ENCODE measurements at regions of chr14 and their contacts with region 1.

Region 1: DNA sequence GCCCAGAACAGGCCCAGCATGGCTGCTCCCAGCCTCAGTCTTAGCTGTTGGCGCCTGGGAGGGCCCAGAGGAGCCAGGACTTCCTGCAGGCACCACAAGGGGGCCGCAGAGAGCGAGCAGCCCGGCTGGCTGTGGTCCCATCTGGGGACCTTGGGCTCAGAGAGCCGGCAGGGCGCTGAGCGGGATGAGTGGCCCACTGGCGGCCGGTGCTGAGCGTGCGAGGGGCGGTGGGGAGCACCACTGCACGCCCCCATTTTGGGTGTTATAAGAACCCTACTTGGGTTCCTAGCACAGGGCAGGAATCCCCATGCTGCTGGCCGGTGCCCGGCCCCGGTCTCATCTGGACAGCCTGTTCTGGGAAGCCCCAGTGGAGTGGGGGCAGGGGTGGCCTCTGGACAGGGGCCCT is 25.9 kb upstream of the CRIP2 start:
- DNase-seq: peak; percentile 47
- ATAC-seq: peak; percentile 98
- H3K4me3 ChIP-seq: no peak overlapping the region
- H3K27ac ChIP-seq: no peak overlapping the region
- H3K4me1 ChIP-seq: no peaks in the 10 kb centered on the region
- H3K27me3 ChIP-seq: no peaks in the 10 kb centered on the region
- CTCF ChIP-seq: peak; percentile 84
- POLR2A ChIP-seq: no peak
- RAD21 ChIP-seq: peak; percentile 71

Region 2: DNA sequence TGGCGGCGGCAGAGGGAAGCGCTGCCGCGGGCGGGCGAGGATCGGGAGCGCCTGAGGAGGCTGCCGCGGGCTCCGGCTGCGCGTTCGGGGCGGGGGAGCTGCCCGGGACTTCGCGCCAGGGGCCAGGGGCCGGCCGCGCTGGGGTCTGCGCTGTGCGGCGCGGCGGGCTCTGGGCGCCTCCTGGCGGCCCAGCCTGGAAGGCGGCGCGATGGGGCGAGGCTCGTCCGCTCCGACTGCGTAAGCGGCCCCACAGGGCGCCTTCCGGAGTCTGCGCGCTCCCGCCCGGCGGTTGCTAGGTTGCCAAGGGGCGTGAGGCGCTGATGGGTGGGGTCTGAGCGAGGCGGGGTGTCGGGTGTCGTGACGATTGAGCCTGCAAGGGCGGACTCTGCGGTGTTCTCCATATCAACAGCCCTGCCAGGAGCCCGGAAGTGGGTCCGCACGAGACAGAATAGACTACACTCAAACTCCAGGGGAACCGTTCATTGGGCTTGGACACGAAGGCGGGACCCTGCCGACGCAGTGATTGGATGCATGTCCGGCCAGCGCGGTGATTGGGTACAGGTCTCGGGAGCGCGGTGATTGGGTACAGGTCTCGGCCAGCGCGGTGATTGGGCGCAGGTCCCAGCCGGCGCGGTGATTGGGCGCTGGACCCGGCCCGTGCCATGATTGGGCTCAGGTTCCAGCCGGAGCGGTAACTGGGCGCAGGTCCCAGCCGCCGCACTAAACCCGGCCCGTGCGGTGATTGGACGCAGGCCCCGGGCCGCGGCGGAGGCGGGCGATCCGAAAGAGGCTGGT is 42.1 kb after region 1 on chr14 and contains the start of gene TEDC1:
- CTCF ChIA-PET with region 1: interaction called, 3 read pairs
- POLR2A ChIA-PET with region 1: no interaction called
- dilution Hi-C with region 1: no loop called
- in situ Hi-C with region 1: no loop called
- intact Hi-C with region 1: loop called (anchors 1 kb)
- DNase-seq: peak; percentile 100
- ATAC-seq: peak; percentile 86
- H3K4me3 ChIP-seq: peak within 1 kb of the TSS; percentile 61
- H3K27ac ChIP-seq: peak within 1 kb of the TSS; percentile 35; the same call in 1 of the 2 replicates
- H3K4me1 ChIP-seq: peaks cover 2% of the 10 kb centered on the region; the same call in 1 of the 2 replicates
- H3K27me3 ChIP-seq: peaks cover 20% of the 10 kb centered on the region; the same call in 1 of the 2 replicates
- CTCF ChIP-seq: peak; percentile 98
- POLR2A ChIP-seq: no peak
- RAD21 ChIP-seq: peak; percentile 87
- total RNA-seq, gene TEDC1: 4.2 and 5.7 TPM in 2 replicates

Measured in IMR-90 (cell line).